PC-9 (cell line): ENCODE measurements at regions of chr4 and their contacts with region 1.

Region 1: GRCh38 chr4:86452947-86453531 is 93.2 kb upstream of the MAPK10 start:
- DNase-seq: peak; percentile 62 to 73
- H3K4me3 ChIP-seq: peak overlapping the region; percentile 42; the same call in 1 of the 2 replicates
- H3K27ac ChIP-seq: peak overlapping the region; percentile 78
- H3K4me1 ChIP-seq: peaks cover 42% of the 10 kb centered on the region
- H3K27me3 ChIP-seq: no peaks in the 10 kb centered on the region
- CTCF ChIP-seq: no peak

Region 2: GRCh38 chr4:84792366-84793301 is 1660.4 kb before region 1 on chr4:
- CTCF ChIA-PET with region 1: no interaction called
- POLR2A ChIA-PET with region 1: no interaction called
- intact Hi-C with region 1: no loop called
- DNase-seq: no peak
- H3K4me3 ChIP-seq: no peak overlapping the region
- H3K27ac ChIP-seq: no peak overlapping the region
- H3K4me1 ChIP-seq: no peaks in the 10 kb centered on the region
- H3K27me3 ChIP-seq: no peaks in the 10 kb centered on the region
- CTCF ChIP-seq: no peak

Region 3: DNA sequence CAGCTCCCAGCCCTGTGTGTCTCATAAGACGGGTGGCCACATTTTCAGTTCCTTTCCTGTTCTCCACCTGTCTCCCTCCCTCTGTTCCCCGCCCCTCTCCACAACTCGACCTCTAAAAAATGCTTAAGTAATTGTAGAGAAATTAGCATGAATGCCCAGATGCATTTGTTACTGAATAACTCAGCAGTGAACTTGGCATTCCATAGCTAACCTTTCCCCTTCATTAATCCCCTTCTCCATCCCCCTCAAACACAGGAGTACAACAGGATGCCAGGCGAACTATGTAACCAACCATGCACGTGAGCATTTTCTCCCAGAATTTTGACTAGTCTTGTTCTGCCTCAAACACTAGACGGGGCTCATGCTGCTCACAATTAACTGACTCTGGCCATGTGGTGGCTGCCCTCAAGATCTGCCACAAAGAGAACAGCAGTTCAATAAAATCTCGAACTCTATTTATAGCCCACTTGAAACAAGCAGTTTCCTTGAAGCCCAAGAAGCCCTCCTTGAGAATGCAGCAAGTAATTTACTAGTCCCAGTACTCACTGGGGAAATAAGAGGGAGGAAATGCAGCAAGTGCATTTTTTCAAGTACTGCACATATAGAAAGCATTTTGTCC is 626.9 kb before region 1 on chr4:
- CTCF ChIA-PET with region 1: interaction called, 11 read pairs
- POLR2A ChIA-PET with region 1: no interaction called
- intact Hi-C with region 1: no loop called
- DNase-seq: no peak
- H3K4me3 ChIP-seq: no peak overlapping the region
- H3K27ac ChIP-seq: no peak overlapping the region
- H3K4me1 ChIP-seq: no peaks in the 10 kb centered on the region
- H3K27me3 ChIP-seq: no peaks in the 10 kb centered on the region
- CTCF ChIP-seq: no peak

Region 4: GRCh38 chr4:86338989-86339388 is 114.0 kb before region 1 on chr4:
- CTCF ChIA-PET with region 1: no interaction called
- POLR2A ChIA-PET with region 1: interaction called, 10 read pairs
- intact Hi-C with region 1: no loop called
- DNase-seq: peak; percentile 47 to 80
- H3K4me3 ChIP-seq: no peak overlapping the region
- H3K27ac ChIP-seq: peak overlapping the region; percentile 66
- H3K4me1 ChIP-seq: peaks cover 12% of the 10 kb centered on the region
- H3K27me3 ChIP-seq: no peaks in the 10 kb centered on the region
- CTCF ChIP-seq: no peak

Region 5: GRCh38 chr4:87093443-87094123 is 640.5 kb after region 1 on chr4:
- CTCF ChIA-PET with region 1: interaction called, 23 read pairs
- POLR2A ChIA-PET with region 1: no interaction called
- intact Hi-C with region 1: no loop called
- DNase-seq: no peak
- H3K4me3 ChIP-seq: no peak overlapping the region
- H3K27ac ChIP-seq: peak overlapping the region; percentile 82
- H3K4me1 ChIP-seq: peaks cover 27% of the 10 kb centered on the region
- H3K27me3 ChIP-seq: no peaks in the 10 kb centered on the region
- CTCF ChIP-seq: peak; percentile 50